Activated CD4-positive, alpha-beta memory T cell treated with anti-CD3 and anti-CD28 coated beads for 36 hours (primary cell): ENCODE measurements at regions of chr1 and their contacts with region 1.

Region 1: DNA sequence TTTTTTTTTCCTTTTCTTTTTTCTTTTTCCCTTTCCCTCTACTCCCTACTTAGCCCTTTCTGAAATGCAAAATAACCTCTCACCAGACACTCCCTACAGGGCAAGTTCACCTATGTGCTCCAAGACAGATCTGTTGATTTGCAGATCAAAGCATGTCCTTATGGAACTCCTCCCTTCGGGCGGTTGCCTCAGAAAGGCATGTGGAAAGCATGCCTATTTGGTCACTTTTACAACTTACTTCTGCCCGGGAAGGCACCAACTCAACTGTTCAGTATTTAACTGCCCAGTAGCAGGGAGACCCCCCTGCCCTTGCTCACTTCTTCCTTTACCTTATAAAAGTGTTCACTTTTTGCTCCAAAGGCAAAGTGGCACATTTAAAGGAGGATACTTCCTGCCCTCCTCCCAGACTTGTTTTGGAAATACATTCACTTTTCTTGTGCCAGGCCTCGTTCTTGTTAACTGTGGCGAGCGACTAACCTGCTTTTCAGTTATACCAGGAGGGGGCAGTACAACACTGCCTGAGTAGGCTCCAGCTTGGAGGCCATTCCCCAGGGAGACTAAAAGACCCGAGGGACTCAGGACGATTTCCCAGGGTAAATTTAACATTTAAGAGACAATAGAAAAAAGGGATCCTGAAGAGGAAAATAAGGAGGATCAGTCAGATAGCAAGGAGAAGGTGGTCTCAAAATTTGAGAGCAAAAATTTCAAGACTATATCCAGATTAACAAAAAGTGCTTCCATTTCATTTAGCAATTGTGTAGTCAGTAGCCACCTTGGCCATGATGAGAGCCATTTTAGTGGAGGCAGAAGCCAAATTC is 12.3 kb upstream of the SLAMF7 start:
- DNase-seq: peak; percentile 72
- H3K4me3 Mint-ChIP-seq: no peak overlapping the region
- H3K27ac Mint-ChIP-seq: no peak overlapping the region
- H3K4me1 Mint-ChIP-seq: peaks cover 24% of the 10 kb centered on the region
- H3K27me3 Mint-ChIP-seq: no peaks in the 10 kb centered on the region

Region 2: GRCh38 chr1:160711602-160712311 is 14.9 kb before region 1 on chr1 and contains the start of gene CD48:
- CTCF ChIA-PET with region 1: interaction called, 22 read pairs
- POLR2A ChIA-PET with region 1: interaction called, 8 read pairs
- intact Hi-C with region 1: no loop called
- DNase-seq: peak; percentile 65
- H3K4me3 Mint-ChIP-seq: no peak within 1 kb of the TSS
- H3K27ac Mint-ChIP-seq: no peak within 1 kb of the TSS
- H3K4me1 Mint-ChIP-seq: peaks cover 17% of the 10 kb centered on the region
- H3K27me3 Mint-ChIP-seq: no peaks in the 10 kb centered on the region
- total RNA-seq, gene CD48: 190 to 194 TPM

Region 3: DNA sequence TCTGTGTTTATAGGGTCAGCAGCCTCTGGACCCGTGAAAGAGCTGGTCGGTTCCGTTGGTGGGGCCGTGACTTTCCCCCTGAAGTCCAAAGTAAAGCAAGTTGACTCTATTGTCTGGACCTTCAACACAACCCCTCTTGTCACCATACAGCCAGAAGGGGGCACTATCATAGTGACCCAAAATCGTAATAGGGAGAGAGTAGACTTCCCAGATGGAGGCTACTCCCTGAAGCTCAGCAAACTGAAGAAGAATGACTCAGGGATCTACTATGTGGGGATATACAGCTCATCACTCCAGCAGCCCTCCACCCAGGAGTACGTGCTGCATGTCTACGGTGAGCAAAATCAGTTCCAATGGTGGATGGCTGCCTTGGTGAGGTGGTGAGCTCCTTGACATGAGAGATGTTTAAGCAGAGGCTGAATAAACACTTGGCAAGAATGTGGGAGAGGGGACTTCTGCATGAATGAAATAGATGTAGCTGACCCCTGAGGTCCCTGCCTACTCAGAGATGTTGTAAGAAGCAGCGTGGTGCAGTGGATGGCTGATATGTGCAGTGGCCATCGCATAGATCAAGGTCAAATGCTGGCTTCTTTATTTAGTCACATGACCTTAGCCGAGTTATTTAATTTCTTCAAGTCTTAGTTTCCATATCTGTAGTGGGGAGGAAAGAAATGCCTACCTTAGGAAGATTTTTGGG is 21.6 kb after region 1 on chr1:
- CTCF ChIA-PET with region 1: interaction called, 15 read pairs
- POLR2A ChIA-PET with region 1: no interaction called
- intact Hi-C with region 1: loop called (anchors 1 kb)
- DNase-seq: no peak
- H3K4me3 Mint-ChIP-seq: no peak overlapping the region
- H3K27ac Mint-ChIP-seq: no peak overlapping the region
- H3K4me1 Mint-ChIP-seq: peaks cover 62% of the 10 kb centered on the region
- H3K27me3 Mint-ChIP-seq: no peaks in the 10 kb centered on the region

Region 4: GRCh38 chr1:160813215-160813614 is 86.5 kb after region 1 on chr1:
- CTCF ChIA-PET with region 1: interaction called, 3 read pairs
- POLR2A ChIA-PET with region 1: no interaction called
- intact Hi-C with region 1: loop called (anchors 5 kb)
- DNase-seq: peak; percentile 33
- H3K4me3 Mint-ChIP-seq: no peak overlapping the region
- H3K27ac Mint-ChIP-seq: no peak overlapping the region
- H3K4me1 Mint-ChIP-seq: peaks cover 38% of the 10 kb centered on the region
- H3K27me3 Mint-ChIP-seq: no peaks in the 10 kb centered on the region

Region 5: GRCh38 chr1:160830321-160831153 is 103.8 kb after region 1 on chr1:
- CTCF ChIA-PET with region 1: interaction called, 40 read pairs
- POLR2A ChIA-PET with region 1: no interaction called
- intact Hi-C with region 1: loop called (anchors 1 kb)
- DNase-seq: peak; percentile 86
- H3K4me3 Mint-ChIP-seq: no peak overlapping the region
- H3K27ac Mint-ChIP-seq: no peak overlapping the region
- H3K4me1 Mint-ChIP-seq: peaks cover 12% of the 10 kb centered on the region
- H3K27me3 Mint-ChIP-seq: no peaks in the 10 kb centered on the region

Region 6: DNA sequence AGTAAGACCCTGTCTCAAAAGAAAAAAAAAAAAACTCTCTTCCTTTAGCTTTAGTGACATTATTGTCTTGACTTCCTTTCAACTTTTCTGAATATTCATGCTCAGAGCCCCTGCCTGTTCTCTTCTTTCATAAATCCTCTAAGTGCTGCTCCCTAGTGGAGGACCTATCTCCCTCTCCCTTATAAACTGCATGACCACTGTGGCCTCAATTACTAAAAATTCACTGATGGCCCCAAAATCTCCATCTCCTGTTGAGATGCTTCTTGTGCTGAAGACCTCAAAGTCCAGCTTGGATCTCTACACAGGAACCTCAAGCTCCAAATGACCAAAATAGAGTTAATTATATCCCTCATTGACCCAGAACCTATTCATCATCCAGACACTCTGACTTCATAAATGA is 150.5 kb after region 1 on chr1:
- CTCF ChIA-PET with region 1: interaction called, 5 read pairs
- POLR2A ChIA-PET with region 1: no interaction called
- intact Hi-C with region 1: loop called (anchors 5 kb)
- DNase-seq: no peak
- H3K4me3 Mint-ChIP-seq: no peak overlapping the region
- H3K27ac Mint-ChIP-seq: no peak overlapping the region
- H3K4me1 Mint-ChIP-seq: peaks cover 15% of the 10 kb centered on the region
- H3K27me3 Mint-ChIP-seq: no peaks in the 10 kb centered on the region

Region 7: DNA sequence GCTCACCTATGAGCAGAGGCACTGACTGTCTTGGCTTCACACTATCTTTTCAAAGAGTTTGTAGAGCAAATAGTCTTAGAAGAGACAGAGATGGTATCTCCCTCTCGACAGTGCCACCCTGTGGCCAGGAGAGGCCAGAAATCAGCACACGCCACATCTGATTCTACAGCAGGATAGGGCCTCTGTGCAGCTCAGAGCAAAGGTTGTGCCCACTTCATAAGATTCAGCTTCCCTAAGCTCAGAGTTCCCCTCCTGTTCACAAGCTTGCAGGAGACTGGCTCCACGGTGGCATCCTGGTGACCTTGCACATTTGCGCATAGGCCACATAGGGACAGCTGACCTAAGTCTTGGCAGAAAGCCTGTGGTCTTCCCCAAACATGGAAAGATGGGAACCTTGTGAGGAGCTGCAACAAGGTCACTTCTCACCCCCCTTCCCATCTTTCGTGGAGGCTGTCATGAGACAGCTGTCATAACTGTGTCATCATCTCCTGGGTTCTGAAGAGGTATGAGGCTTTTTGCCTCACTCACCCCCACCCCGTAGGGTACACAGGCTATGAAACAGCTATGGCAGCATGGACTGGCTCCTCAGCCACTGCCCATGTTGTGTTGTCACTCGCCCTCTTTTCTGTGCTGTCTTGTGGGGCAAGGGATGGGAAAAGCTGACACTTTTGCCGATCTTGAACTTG is 224.9 kb after region 1 on chr1:
- CTCF ChIA-PET with region 1: interaction called, 112 read pairs
- POLR2A ChIA-PET with region 1: no interaction called
- intact Hi-C with region 1: loop called (anchors 2 kb)
- DNase-seq: peak; percentile 81
- H3K4me3 Mint-ChIP-seq: no peak overlapping the region
- H3K27ac Mint-ChIP-seq: no peak overlapping the region
- H3K4me1 Mint-ChIP-seq: peaks cover 2% of the 10 kb centered on the region
- H3K27me3 Mint-ChIP-seq: no peaks in the 10 kb centered on the region